ENCODE measurements at regions of chr14 and their contacts with region 1.

Region 1: DNA sequence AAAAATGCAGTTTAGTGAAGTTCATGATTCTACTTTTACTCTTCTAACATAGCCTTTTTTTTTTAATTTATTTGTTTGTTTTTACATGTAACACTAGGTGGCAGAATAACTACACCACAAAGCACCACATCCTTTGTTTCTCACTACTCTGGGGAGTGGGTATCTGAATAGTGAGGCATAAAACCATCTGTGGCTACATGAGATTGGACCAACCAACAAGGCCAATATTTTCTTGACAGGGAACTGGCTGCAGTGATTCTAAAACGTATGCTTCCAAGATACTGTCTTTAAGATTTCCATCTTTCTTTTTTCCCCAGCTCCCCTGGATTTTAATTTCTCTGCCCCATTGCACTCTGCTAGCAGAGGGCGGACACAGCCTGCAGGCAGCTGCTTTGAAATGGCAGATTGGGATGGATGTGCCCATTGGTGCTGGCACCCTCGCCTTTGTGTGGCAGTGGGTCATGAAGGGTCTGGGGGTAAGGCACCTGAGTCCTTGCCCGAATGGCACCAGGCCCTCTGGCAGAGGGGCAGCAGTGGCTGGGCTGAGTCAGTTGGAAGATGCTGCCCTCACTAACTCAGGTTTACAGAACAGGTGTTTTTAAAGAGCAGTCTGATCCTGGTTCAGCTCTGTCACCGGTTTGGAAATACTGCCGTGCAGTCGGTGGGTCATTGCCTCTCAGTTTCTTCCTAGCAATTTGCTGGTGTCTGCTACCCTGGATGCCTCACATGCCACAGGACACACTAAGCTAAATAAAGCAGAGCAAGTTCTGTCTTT is 429.1 kb downstream of the RAD51B start:
- DNase-seq: peak; percentile 64
- H3K4me3 ChIP-seq: no peak overlapping the region
- H3K27ac ChIP-seq: peak overlapping the region; percentile 92 to 93
- H3K4me1 ChIP-seq: peaks cover 11 to 66% of the 10 kb centered on the region in 2 experiments
- H3K27me3 ChIP-seq: no peaks in the 10 kb centered on the region
- CTCF ChIP-seq: peak; percentile 75
- EP300 ChIP-seq: peak in 1 of 2 experiments; percentile 38; a peak in 1 of 4 replicates
- RAD21 ChIP-seq: peak; percentile 98

Region 2: GRCh38 chr14:68261092-68261842 is 12.6 kb after region 1 on chr14:
- CTCF ChIA-PET with region 1: interaction called, 16 read pairs
- POLR2A ChIA-PET with region 1: no interaction called
- DNase-seq: no peak
- H3K4me3 ChIP-seq: no peak overlapping the region
- H3K27ac ChIP-seq: no peak overlapping the region
- H3K4me1 ChIP-seq: peaks cover 4 to 13% of the 10 kb centered on the region in 2 experiments; a peak in 3 of 4 replicates
- H3K27me3 ChIP-seq: no peaks in the 10 kb centered on the region
- CTCF ChIP-seq: no peak
- EP300 ChIP-seq: no peak
- RAD21 ChIP-seq: no peak

Region 3: GRCh38 chr14:68655911-68656360 is 407.3 kb after region 1 on chr14:
- CTCF ChIA-PET with region 1: interaction called, 13 read pairs
- POLR2A ChIA-PET with region 1: no interaction called
- DNase-seq: peak; percentile 40
- H3K4me3 ChIP-seq: no peak overlapping the region
- H3K27ac ChIP-seq: peak overlapping the region in 1 of 2 experiments; percentile 91; a peak in 2 of 4 replicates
- H3K4me1 ChIP-seq: peaks cover 10 to 39% of the 10 kb centered on the region in 2 experiments; a peak in 3 of 4 replicates
- H3K27me3 ChIP-seq: no peaks in the 10 kb centered on the region
- CTCF ChIP-seq: no peak
- EP300 ChIP-seq: no peak
- RAD21 ChIP-seq: peak; percentile 55

Measured in SK-N-SH (cell line).